ENCODE measurements at regions of chr16 and their contacts with region 1.

Region 1: GRCh38 chr16:50354629-50355456 is 13.9 kb downstream of the BRD7 start:
- DNase-seq: no peak
- ATAC-seq: no peak
- H3K4me3 Mint-ChIP-seq: no peak overlapping the region
- H3K27ac Mint-ChIP-seq: no peak overlapping the region
- H3K4me1 Mint-ChIP-seq: peaks cover 12% of the 10 kb centered on the region
- H3K27me3 Mint-ChIP-seq: no peaks in the 10 kb centered on the region
- CTCF ChIP-seq: peak; percentile 75

Region 2: GRCh38 chr16:50024684-50025536 is 329.9 kb before region 1 on chr16 and contains the start of gene CNEP1R1:
- CTCF ChIA-PET with region 1: interaction called, 18 read pairs
- POLR2A ChIA-PET with region 1: no interaction called
- intact Hi-C with region 1: loop called (anchors 1 kb)
- DNase-seq: peak; percentile 87
- ATAC-seq: peak; percentile 95
- H3K4me3 Mint-ChIP-seq: peak within 1 kb of the TSS; percentile 96
- H3K27ac Mint-ChIP-seq: peak within 1 kb of the TSS; percentile 83
- H3K4me1 Mint-ChIP-seq: peaks cover 19% of the 10 kb centered on the region
- H3K27me3 Mint-ChIP-seq: peaks cover 6% of the 10 kb centered on the region
- CTCF ChIP-seq: peak; percentile 82
- total RNA-seq, gene CNEP1R1: 22.1 and 31.0 TPM in 2 replicates

Region 3: DNA sequence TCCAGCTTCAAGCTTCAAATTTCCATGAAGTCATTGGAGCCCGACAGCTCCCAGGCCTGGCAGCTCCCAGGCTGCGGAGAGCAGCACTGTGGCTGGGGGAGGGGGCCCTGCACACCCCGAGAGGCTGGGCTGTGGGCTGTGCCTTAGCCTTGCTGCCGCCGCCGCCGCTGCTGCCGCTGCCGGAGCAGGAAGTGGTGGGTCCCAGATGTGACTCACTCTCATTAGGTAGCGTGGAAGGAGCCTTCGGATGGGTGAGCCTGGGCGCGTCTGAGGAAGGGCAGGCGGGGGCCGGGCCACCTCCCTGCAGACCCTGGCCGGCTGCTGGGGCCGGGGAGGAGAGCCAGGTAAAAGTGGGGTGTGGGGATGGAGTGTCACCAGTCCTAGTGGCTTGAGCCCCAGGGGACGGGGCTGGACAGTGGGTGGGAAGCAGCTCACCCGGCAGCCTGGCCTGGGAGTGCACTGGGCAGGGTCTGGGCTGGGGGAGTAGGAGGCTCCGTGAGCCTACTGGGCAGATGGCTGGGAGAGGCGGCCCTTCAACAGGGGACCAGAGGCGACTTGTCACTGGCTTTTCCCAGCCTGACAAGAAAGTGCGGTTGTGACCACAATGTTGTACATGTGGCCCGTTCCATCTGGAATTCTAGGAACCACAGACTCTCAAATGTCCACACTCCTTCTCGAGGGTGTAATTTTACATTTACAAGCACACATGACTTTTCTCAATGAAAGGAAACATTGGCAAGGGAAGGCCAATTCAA is 88.3 kb before region 1 on chr16 and contains the start of gene ADCY7:
- CTCF ChIA-PET with region 1: no interaction called
- POLR2A ChIA-PET with region 1: no interaction called
- intact Hi-C with region 1: loop called (anchors 1 kb)
- DNase-seq: peak; percentile 61
- ATAC-seq: peak; percentile 93
- H3K4me3 Mint-ChIP-seq: peak within 1 kb of the TSS; percentile 84
- H3K27ac Mint-ChIP-seq: peak within 1 kb of the TSS; percentile 90
- H3K4me1 Mint-ChIP-seq: peaks cover 70% of the 10 kb centered on the region
- H3K27me3 Mint-ChIP-seq: no peaks in the 10 kb centered on the region
- CTCF ChIP-seq: no peak
- total RNA-seq, gene ADCY7: 109 and 128 TPM in 2 replicates

Region 4: GRCh38 chr16:50335196-50335958 is 19.5 kb before region 1 on chr16:
- CTCF ChIA-PET with region 1: interaction called, 10 read pairs
- POLR2A ChIA-PET with region 1: interaction called, 5 read pairs
- intact Hi-C with region 1: no loop called
- DNase-seq: no peak
- ATAC-seq: peak; percentile 84
- H3K4me3 Mint-ChIP-seq: peak overlapping the region; percentile 56
- H3K27ac Mint-ChIP-seq: peak overlapping the region; percentile 91
- H3K4me1 Mint-ChIP-seq: peaks cover 76% of the 10 kb centered on the region
- H3K27me3 Mint-ChIP-seq: no peaks in the 10 kb centered on the region
- CTCF ChIP-seq: no peak

Region 5: DNA sequence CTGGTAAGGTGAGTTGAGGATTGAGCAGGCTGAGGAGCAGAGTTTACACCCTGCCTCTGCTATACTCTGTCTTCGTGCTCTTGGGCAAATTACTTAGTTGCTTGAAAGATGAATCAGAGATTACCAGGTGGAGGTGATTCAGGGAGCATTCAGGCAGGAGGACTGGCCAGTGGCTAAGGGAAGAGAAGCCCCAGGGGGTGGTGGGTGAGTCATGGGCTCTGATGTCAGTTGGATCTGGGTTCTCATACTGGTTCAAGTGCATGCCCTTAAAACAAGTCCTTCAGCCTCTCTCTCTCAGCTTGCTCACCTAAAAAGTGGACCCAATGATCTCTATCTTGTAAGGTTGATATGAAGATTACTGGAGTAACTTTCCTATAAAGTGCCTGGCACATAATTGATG is 42.4 kb after region 1 on chr16:
- CTCF ChIA-PET with region 1: no interaction called
- POLR2A ChIA-PET with region 1: no interaction called
- intact Hi-C with region 1: no loop called
- DNase-seq: no peak
- ATAC-seq: no peak
- H3K4me3 Mint-ChIP-seq: no peak overlapping the region
- H3K27ac Mint-ChIP-seq: peak overlapping the region; percentile 6
- H3K4me1 Mint-ChIP-seq: peaks cover 9% of the 10 kb centered on the region
- H3K27me3 Mint-ChIP-seq: no peaks in the 10 kb centered on the region
- CTCF ChIP-seq: no peak

Region 6: DNA sequence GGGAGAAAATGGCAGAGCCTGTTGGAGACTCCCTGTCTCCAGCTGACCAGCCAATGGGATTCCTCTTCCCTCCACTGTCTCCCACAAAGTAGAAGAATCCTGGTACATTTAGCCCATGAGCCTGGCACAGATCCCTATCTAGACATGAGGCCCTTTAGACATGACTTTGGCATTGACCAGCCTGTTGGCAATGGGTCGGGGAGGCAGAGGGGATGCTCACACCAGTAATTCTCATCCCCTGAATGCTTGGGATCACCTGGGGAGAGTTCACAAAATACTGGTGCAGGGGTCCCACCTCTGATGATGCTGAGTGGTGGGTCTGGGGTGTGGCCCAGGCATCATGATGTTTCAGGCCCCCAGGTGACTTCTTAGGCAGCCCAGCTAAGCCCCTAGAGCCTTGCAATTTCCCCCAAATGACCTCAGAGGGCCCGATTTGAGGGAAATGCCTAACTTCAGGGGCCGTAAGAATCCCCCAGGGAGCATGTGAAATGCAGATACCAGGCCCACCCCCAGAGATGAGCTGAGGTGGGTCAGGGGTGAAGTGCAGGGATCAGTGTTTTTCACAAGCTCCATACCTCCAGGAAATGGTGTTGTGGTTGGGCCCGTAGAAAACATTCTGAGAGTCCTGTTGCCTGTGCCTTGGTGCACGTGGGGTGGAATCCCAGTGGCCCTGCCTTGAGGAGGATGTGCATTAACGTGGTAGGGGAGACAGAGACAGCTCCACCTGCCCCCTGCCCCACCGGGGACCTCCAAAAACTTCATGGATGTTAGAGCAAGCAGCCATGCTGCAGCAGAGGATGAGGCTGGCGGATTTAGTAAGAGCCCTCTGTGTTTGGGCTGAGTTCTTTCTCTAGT is 284.2 kb after region 1 on chr16:
- CTCF ChIA-PET with region 1: no interaction called
- POLR2A ChIA-PET with region 1: no interaction called
- intact Hi-C with region 1: no loop called
- DNase-seq: no peak
- ATAC-seq: no peak
- H3K4me3 Mint-ChIP-seq: no peak overlapping the region
- H3K27ac Mint-ChIP-seq: no peak overlapping the region
- H3K4me1 Mint-ChIP-seq: no peaks in the 10 kb centered on the region
- H3K27me3 Mint-ChIP-seq: peaks cover 8% of the 10 kb centered on the region
- CTCF ChIP-seq: no peak

Region 7: GRCh38 chr16:50747207-50747956 is 392.5 kb after region 1 on chr16:
- CTCF ChIA-PET with region 1: interaction called, 3 read pairs
- POLR2A ChIA-PET with region 1: interaction called, 3 read pairs
- intact Hi-C with region 1: loop called (anchors 1 kb)
- DNase-seq: no peak
- ATAC-seq: peak; percentile 61
- H3K4me3 Mint-ChIP-seq: peak overlapping the region; percentile 45
- H3K27ac Mint-ChIP-seq: peak overlapping the region; percentile 11
- H3K4me1 Mint-ChIP-seq: peaks cover 53% of the 10 kb centered on the region
- H3K27me3 Mint-ChIP-seq: no peaks in the 10 kb centered on the region
- CTCF ChIP-seq: no peak

Measured in activated B cell treated with CpG ODN at 0.5 μM for 24 hours (primary cell).